Transverse colon (tissue), 4 donors: ENCODE measurements at regions of chr21 and their contacts with region 1.

Region 1: DNA sequence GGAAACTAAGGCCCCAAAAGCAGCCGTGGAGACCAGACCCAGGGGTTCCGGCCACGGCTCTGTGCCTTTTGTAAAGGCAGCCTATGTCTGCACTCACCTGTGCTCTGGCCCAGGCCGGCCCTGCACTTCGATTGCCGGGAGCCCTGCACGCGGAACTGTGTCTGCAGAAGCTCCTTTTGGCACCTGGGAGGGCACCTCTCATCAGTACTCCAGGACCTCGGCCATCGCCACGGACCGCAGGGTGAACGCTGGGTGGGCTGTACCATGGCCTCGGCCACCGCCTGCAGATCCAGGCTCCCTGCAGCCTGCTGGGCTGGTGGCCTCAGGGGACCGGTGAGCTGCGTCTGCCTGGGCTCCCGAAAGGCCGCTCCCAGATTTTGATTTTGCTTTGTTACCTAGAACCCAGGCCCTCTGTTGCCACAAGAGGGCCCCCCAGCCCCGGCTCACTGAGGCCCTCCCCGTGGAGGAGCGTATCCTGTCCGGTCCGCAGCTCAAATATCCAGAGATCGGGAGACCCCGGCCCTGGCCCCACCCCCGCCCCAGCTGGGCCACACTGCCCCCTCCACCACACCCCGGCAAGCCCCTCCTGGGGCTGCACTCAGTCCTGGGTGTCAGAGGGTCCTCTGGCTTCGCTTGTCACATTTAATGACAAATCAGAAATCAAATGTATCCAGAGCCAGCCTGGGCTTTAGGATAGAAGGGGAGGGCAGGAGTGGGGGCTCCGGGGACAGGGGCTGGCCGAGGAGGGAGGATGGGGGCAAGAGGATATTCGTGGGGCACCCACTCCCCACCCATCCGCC is 60.2 kb upstream of the PDE9A start:
- DNase-seq: peak; percentile 85
- H3K4me3 ChIP-seq: peak overlapping the region in 1 of 4 donors; percentile 32
- H3K27ac ChIP-seq: no peak overlapping the region
- H3K4me1 ChIP-seq: peaks cover 0 to 9% (median 8%) of the 10 kb centered on the region in 4 donors
- H3K27me3 ChIP-seq: no peaks in the 10 kb centered on the region
- CTCF ChIP-seq: peak; percentile 72 to 86 (median 77)
- EP300 ChIP-seq: no peak
- POLR2A ChIP-seq: no peak

Region 2: GRCh38 chr21:41466024-41466835 is 1127.0 kb before region 1 on chr21:
- in situ Hi-C with region 1: no loop called
- intact Hi-C with region 1: no loop called
- DNase-seq: no peak
- H3K4me3 ChIP-seq: no peak overlapping the region
- H3K27ac ChIP-seq: no peak overlapping the region
- H3K4me1 ChIP-seq: peaks cover 0 to 4% (median 0%) of the 10 kb centered on the region in 4 donors
- H3K27me3 ChIP-seq: no peaks in the 10 kb centered on the region
- CTCF ChIP-seq: no peak
- EP300 ChIP-seq: no peak
- POLR2A ChIP-seq: no peak

Region 3: DNA sequence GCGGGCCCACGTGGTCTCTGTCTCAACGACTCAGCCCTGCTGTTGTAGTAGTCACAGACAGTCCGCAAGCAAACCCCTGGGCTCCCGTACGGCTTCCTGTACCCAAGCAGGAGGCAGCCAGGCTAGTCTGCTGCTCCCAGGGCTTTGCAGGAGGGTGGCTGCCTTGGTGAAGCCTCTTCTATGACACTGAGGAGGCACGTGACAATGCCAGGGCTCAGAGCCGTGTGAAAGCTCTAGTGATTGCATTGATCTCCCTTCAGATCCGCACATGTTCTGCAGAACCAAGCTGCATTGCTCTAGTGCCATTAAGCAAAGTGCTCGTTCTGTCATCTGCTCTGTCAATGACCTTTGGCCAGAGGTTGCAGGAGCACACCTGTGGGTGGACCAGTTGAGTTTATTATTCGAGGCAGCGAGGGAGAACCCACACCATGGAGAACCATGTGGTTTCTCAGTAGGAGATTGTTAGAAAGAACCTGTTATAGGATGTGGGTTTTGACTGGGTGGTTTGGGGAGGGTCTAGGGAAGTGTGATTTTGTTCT is 504.0 kb before region 1 on chr21:
- in situ Hi-C with region 1: no loop called
- intact Hi-C with region 1: no loop called
- DNase-seq: no peak
- H3K4me3 ChIP-seq: no peak overlapping the region
- H3K27ac ChIP-seq: no peak overlapping the region
- H3K4me1 ChIP-seq: peaks cover 4 to 28% (median 21%) of the 10 kb centered on the region in 4 donors
- H3K27me3 ChIP-seq: no peaks in the 10 kb centered on the region
- CTCF ChIP-seq: no peak
- EP300 ChIP-seq: no peak
- POLR2A ChIP-seq: no peak

Region 4: DNA sequence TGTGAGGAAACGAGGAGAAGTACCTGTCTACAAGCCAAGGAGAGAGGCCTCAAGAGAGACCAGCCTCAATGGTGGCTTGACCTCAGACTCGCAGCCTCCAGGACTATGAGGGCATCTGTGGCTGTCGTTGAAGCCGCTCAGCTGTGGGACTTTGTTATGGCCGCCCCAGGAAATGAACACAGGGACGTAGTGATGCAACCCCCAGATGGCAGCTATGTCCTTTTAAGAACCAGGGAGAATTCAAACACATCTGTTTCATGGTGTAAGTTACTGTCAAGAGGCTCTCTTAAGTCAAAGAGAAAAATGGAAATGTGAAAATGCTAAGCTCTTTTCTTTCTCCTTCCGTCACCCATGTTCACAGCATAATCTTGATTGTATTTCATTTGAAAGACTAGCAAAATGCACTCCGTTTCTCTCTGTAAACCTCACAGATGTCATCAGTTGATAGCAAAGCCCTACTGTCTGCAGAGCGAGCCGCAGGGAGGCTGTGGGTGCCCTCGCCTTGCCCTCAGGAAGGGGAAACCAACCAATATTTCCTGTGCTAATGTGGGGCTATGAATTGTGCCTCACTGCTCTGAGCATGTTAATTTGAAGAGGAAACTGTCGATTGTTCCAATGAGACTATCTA is 168.2 kb before region 1 on chr21:
- in situ Hi-C with region 1: no loop called
- intact Hi-C with region 1: no loop called
- DNase-seq: peak; percentile 39
- H3K4me3 ChIP-seq: no peak overlapping the region
- H3K27ac ChIP-seq: peak overlapping the region in 1 of 4 donors; percentile 30
- H3K4me1 ChIP-seq: peaks cover 0 to 7% (median 0%) of the 10 kb centered on the region in 4 donors
- H3K27me3 ChIP-seq: peaks cover 9% of the 10 kb centered on the region
- CTCF ChIP-seq: no peak
- EP300 ChIP-seq: no peak
- POLR2A ChIP-seq: no peak

Region 5: GRCh38 chr21:42760951-42761680 is 167.9 kb after region 1 on chr21:
- in situ Hi-C with region 1: loop called in 1 of 4 experiments (anchors 25 kb)
- intact Hi-C with region 1: no loop called
- DNase-seq: no peak
- H3K4me3 ChIP-seq: no peak overlapping the region
- H3K27ac ChIP-seq: no peak overlapping the region
- H3K4me1 ChIP-seq: no peaks in the 10 kb centered on the region
- H3K27me3 ChIP-seq: no peaks in the 10 kb centered on the region
- CTCF ChIP-seq: no peak
- EP300 ChIP-seq: no peak
- POLR2A ChIP-seq: no peak

Region 6: DNA sequence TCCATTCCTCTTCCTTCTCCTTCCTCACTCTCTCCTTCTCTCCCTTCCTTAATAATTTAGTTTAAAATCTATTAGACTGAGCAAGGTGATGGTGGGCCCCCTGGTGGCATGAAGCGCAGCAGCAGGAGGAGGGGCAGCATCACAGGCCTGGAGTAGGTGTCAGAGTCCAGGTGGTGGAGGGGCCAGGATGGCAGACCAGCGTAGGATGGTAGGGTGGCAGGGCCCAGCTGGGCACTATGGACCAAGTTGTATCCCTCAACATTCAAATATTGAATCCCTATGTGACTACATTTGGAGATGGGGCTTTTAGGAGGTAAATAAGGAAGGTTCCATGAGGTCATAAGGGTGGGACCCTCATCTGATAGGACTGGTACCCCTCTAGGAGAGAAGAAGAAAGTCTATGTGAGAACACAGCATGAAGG is 225.1 kb after region 1 on chr21:
- in situ Hi-C with region 1: loop called (anchors 10 to 25 kb)
- intact Hi-C with region 1: loop called (anchors 5 kb)
- DNase-seq: peak; percentile 73
- H3K4me3 ChIP-seq: no peak overlapping the region
- H3K27ac ChIP-seq: no peak overlapping the region
- H3K4me1 ChIP-seq: no peaks in the 10 kb centered on the region
- H3K27me3 ChIP-seq: peaks cover 1% of the 10 kb centered on the region
- CTCF ChIP-seq: peak; percentile 89 to 94 (median 93)
- EP300 ChIP-seq: no peak
- POLR2A ChIP-seq: no peak